Spleen (tissue), 13 donors: ENCODE measurements at regions of chr2 and their contacts with region 1.

Region 1: GRCh38 chr2:74250189-74250631 is 51.8 kb downstream of the MTHFD2 start:
- DNase-seq: no peak
- H3K4me3 ChIP-seq: no peak overlapping the region
- H3K27ac ChIP-seq: no peak overlapping the region
- H3K4me1 ChIP-seq: peaks cover 0 to 8% (median 2%) of the 10 kb centered on the region in 6 donors
- H3K27me3 ChIP-seq: no peaks in the 10 kb centered on the region
- CTCF ChIP-seq: peak; percentile 61 to 87 (median 74)
- POLR2A ChIP-seq: no peak

Region 2: GRCh38 chr2:74317701-74318301 is 67.6 kb after region 1 on chr2:
- intact Hi-C with region 1: no loop called
- DNase-seq: no peak
- H3K4me3 ChIP-seq: no peak overlapping the region
- H3K27ac ChIP-seq: no peak overlapping the region
- H3K4me1 ChIP-seq: no peaks in the 10 kb centered on the region
- H3K27me3 ChIP-seq: no peaks in the 10 kb centered on the region
- CTCF ChIP-seq: no peak
- POLR2A ChIP-seq: no peak

Region 3: GRCh38 chr2:74334931-74335333 is 84.7 kb after region 1 on chr2:
- intact Hi-C with region 1: loop called (anchors 5 kb)
- DNase-seq: peak; percentile 87
- H3K4me3 ChIP-seq: no peak overlapping the region
- H3K27ac ChIP-seq: no peak overlapping the region
- H3K4me1 ChIP-seq: peaks cover 0 to 8% (median 2%) of the 10 kb centered on the region in 6 donors
- H3K27me3 ChIP-seq: no peaks in the 10 kb centered on the region
- CTCF ChIP-seq: peak; percentile 64 to 97 (median 91)
- POLR2A ChIP-seq: no peak

Region 4: DNA sequence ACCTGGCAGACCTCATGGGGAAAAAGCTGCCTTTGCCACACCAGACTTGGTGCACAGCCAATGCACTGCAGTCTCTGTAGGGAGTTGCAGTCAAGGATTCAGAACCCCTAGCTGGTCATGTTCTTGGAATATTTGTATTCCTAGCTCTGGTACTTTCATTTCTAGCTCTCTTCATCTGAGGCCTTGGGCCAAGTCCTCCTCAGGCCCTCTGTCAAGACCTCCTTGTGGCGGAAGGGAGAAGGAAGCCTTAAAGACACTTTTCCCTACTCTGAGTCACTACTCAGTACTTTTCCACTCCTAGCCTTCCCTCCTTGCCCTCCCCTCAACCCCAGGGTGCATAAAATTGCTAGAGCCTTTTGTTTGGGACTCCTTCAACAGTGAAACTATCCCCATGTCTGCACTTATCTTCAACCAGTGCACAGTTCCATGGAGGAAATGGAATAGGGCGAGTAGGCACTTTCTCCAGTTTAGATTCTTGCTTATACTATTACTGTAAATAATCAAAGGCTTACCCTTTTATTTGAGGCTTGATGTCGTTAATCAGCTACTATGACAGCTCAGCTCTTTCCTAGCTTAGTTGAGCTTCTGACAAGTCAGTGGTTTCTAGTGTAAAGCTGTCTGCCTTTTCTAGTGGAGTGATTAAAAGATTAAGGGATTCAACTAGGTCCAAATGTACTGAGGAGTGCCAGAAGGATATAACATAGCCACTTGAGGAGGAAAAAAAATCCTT is 382.2 kb after region 1 on chr2:
- intact Hi-C with region 1: no loop called
- DNase-seq: no peak
- H3K4me3 ChIP-seq: no peak overlapping the region
- H3K27ac ChIP-seq: peak overlapping the region in 1 of 8 donors; percentile 34
- H3K4me1 ChIP-seq: no peaks in the 10 kb centered on the region
- H3K27me3 ChIP-seq: no peaks in the 10 kb centered on the region
- CTCF ChIP-seq: no peak
- POLR2A ChIP-seq: no peak